ENCODE measurements at regions of chr21 and their contacts with region 1.

Region 1: GRCh38 chr21:44347911-44348753 is 5.3 kb upstream of the TRPM2 start:
- DNase-seq: no peak
- ATAC-seq: no peak
- H3K4me3 Mint-ChIP-seq: no peak overlapping the region
- H3K27ac Mint-ChIP-seq: no peak overlapping the region
- H3K4me1 Mint-ChIP-seq: peaks cover 18% of the 10 kb centered on the region
- H3K27me3 Mint-ChIP-seq: peaks cover 8% of the 10 kb centered on the region
- CTCF ChIP-seq: no peak

Region 2: DNA sequence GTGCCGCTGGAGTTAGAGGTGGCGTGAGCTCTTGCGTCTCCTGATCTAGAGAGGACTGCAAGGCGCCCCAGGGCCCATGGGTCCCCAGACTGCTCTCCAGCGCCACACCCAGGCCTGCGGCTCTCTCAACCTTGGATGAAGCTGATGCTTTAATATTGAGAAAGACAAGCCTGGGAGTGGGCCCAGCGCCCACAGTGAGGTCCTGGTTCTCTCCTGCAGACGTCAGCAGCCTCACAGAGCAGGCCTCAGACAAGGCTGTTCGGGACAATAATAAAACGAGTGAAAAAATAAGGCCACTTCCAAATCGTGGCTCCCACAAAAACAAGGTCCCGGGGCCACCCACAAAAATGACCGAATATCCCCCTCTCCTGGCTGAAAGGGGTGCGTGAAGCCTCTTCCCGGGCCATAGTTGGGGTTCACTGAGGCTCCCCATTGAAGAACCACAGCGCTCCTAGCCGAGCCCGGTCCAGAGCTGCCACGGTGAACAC is 80.4 kb before region 1 on chr21:
- CTCF ChIA-PET with region 1: no interaction called
- POLR2A ChIA-PET with region 1: no interaction called
- intact Hi-C with region 1: no loop called
- DNase-seq: peak; percentile 48
- ATAC-seq: peak; percentile 34
- H3K4me3 Mint-ChIP-seq: no peak overlapping the region
- H3K27ac Mint-ChIP-seq: no peak overlapping the region
- H3K4me1 Mint-ChIP-seq: no peaks in the 10 kb centered on the region
- H3K27me3 Mint-ChIP-seq: no peaks in the 10 kb centered on the region
- CTCF ChIP-seq: no peak

Region 3: GRCh38 chr21:44304877-44305293 is 43.2 kb before region 1 on chr21:
- CTCF ChIA-PET with region 1: no interaction called
- POLR2A ChIA-PET with region 1: no interaction called
- intact Hi-C with region 1: no loop called
- DNase-seq: peak; percentile 60
- ATAC-seq: peak; percentile 47
- H3K4me3 Mint-ChIP-seq: no peak overlapping the region
- H3K27ac Mint-ChIP-seq: no peak overlapping the region
- H3K4me1 Mint-ChIP-seq: peaks cover 35% of the 10 kb centered on the region
- H3K27me3 Mint-ChIP-seq: no peaks in the 10 kb centered on the region
- CTCF ChIP-seq: peak; percentile 54

Region 4: DNA sequence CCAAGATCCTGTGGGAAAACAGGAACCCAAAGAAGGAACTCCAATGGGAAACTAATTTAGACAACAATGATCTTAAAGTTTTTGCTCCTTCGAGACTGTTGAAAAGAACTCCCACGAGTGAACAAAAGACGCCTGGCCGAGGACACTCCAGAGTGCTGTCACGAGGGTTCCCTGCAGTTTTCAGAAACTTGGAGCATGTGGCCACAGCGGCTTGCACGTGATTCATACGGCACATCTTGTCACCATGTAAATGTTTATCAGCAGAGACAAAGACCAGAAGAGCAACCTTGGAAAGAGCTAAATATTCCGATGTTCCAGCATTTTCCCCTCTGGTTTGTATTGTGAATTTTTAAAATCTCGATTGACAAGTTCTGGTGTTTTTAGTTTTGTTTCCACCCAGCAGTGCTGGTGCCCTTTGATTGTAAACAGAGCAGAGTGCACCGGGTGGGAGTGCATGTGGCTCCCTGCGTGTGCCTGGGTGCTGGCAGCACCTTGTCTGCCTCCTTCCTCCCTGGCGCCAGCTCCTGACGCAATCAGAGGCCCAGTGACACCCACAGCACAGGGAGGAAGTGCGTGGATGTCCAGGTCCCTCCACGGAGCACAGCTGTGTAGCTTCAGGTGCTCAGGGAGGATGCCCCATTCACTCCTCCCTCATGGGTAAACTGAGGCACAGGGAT is 130.1 kb after region 1 on chr21:
- CTCF ChIA-PET with region 1: interaction called, 3 read pairs
- POLR2A ChIA-PET with region 1: no interaction called
- intact Hi-C with region 1: loop called (anchors 10 kb)
- DNase-seq: no peak
- ATAC-seq: no peak
- H3K4me3 Mint-ChIP-seq: no peak overlapping the region
- H3K27ac Mint-ChIP-seq: no peak overlapping the region
- H3K4me1 Mint-ChIP-seq: peaks cover 7% of the 10 kb centered on the region
- H3K27me3 Mint-ChIP-seq: peaks cover 2% of the 10 kb centered on the region
- CTCF ChIP-seq: no peak